ENCODE measurements at regions of chr5 and their contacts with region 1.

Region 1: DNA sequence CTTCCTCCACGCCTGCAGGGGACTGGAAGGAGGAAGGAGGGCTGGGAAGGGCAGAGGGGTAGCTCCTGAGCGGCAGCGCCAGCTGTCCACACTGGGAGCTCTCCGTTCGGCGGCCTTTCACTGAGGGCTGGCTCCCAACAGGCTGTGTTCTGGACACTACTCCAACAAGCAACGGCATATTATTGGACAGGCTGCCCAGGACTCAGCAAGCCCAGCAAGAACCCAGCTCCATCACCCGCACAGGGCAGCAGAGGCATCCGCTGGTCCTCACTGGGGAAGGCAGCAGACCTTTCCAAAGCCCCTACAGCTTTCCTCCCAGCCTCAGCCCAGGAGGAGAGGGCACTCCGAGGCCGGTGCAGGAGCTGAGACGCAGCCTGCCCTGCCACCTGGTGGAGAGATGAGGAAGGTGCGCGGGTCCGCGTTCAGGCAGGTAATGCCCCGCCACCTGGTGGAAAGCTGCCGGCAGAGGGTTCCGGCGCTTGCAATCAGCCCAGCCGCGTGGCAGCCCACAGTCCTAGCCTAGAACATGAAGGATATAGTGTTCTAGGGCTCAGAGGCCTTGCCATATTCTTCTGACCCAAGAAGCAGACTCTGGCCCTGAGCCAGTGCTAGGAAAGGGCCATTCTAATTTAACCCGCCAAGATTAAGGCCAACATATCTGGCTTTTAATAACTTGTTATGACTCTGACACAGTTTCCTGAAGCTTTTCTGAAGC is 74.4 kb downstream of the NRG2 start:
- DNase-seq: peak; percentile 72
- ATAC-seq: peak; percentile 99
- H3K4me3 ChIP-seq: no peak overlapping the region
- H3K27ac ChIP-seq: no peak overlapping the region
- H3K4me1 ChIP-seq: peaks cover 2 to 7% of the 10 kb centered on the region in 2 experiments; a peak in 2 of 4 replicates
- H3K27me3 ChIP-seq: no peaks in the 10 kb centered on the region
- CTCF ChIP-seq: peak; percentile 100
- POLR2A ChIP-seq: no peak
- RAD21 ChIP-seq: peak; percentile 100

Region 2: GRCh38 chr5:139787568-139788293 is 181.0 kb before region 1 on chr5:
- CTCF ChIA-PET with region 1: interaction called, 181 read pairs
- POLR2A ChIA-PET with region 1: interaction called, 10 read pairs
- RAD21 ChIA-PET with region 1: interaction called, 16 to 21 read pairs
- intact Hi-C with region 1: loop called (anchors 1 kb)
- DNase-seq: peak; percentile 54
- ATAC-seq: peak; percentile 90
- H3K4me3 ChIP-seq: peak overlapping the region; percentile 58 to 63
- H3K27ac ChIP-seq: peak overlapping the region; percentile 47; the same call in 1 of the 2 replicates
- H3K4me1 ChIP-seq: peaks cover 3 to 10% of the 10 kb centered on the region in 2 experiments; a peak in 2 of 4 replicates
- H3K27me3 ChIP-seq: no peaks in the 10 kb centered on the region
- CTCF ChIP-seq: peak; percentile 86 to 99 (median 95)
- POLR2A ChIP-seq: no peak
- RAD21 ChIP-seq: peak; percentile 99

Region 3: DNA sequence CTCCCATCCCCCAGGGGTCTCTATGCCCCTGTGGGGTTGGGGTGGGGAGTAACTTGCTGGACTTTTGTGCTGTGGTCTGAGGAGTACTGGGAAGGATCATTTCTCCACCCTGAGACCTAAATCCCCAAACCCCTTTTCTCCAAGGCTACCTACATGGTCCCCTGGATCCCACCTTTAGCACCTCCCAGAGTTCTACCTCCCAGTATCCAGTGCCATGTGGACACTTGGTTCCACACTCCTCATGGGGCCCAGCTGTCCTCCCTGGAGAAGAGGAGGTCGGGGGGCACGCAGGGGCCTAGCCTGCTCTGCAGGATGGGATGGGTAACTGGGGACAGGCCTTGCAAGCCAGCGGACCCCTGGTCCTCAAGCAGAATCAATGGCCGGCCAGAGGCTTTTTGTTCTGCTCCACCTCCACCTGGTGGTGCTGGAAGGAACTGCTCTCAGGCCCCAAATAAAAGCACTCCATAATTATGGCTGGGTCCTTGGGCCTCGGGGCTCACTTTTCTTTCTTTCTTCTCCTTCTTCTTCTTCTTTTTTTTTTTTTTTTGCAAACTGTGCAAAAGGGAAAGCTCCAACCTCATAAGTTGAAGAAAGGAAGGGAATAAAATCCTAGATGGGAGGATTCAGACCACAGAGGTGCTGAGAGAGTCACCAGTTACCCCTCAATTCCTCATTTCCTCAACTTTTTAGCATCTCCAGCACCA is 104.7 kb before region 1 on chr5:
- CTCF ChIA-PET with region 1: interaction called, 6 read pairs
- POLR2A ChIA-PET with region 1: no interaction called
- RAD21 ChIA-PET with region 1: no interaction called
- intact Hi-C with region 1: loop called (anchors 5 kb)
- DNase-seq: no peak
- ATAC-seq: peak; percentile 88
- H3K4me3 ChIP-seq: no peak overlapping the region
- H3K27ac ChIP-seq: no peak overlapping the region
- H3K4me1 ChIP-seq: no peaks in the 10 kb centered on the region; a peak in 1 of 4 replicates
- H3K27me3 ChIP-seq: no peaks in the 10 kb centered on the region
- CTCF ChIP-seq: peak; percentile 85 to 90 (median 88)
- POLR2A ChIP-seq: no peak
- RAD21 ChIP-seq: peak; percentile 85

Region 4: DNA sequence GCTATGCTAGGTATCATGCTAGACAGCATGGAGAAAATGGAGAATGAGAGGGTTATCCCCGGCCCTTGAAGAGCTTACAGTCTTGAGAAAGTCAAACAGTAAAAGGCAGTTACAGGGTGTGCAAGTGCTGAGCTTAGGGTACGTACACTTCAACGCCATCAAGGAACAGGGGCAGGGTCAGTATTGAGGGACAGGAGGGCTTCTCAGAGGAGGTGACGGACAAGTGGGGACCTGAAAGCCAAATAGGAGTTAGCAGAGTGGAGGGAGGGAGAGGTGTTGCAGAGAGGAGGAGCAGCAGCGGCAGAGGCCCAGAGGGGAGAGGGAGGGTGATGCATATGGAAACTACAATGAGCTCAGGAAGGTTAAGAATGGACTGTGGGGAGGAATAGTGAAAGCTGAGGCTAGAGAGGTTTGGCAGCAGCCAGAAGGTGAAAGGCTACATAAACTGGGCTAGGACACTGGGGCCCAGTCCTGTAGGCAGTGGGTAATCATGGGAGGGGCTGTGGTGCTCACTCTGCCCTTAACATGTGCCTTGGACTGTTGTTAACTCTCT is 13.6 kb before region 1 on chr5:
- CTCF ChIA-PET with region 1: interaction called, 24 read pairs
- POLR2A ChIA-PET with region 1: no interaction called
- RAD21 ChIA-PET with region 1: no interaction called
- intact Hi-C with region 1: no loop called
- DNase-seq: no peak
- ATAC-seq: peak; percentile 34
- H3K4me3 ChIP-seq: no peak overlapping the region
- H3K27ac ChIP-seq: no peak overlapping the region
- H3K4me1 ChIP-seq: peaks cover 5 to 13% of the 10 kb centered on the region in 2 experiments; a peak in 3 of 4 replicates
- H3K27me3 ChIP-seq: no peaks in the 10 kb centered on the region; the same call in 1 of the 2 replicates
- CTCF ChIP-seq: no peak
- POLR2A ChIP-seq: no peak
- RAD21 ChIP-seq: no peak

Region 5: GRCh38 chr5:140042643-140043500 is 74.2 kb after region 1 on chr5 and contains the start of gene NRG2:
- CTCF ChIA-PET with region 1: interaction called, 12 read pairs
- POLR2A ChIA-PET with region 1: no interaction called
- RAD21 ChIA-PET with region 1: interaction called in 1 of 2 experiments, 7 read pairs
- intact Hi-C with region 1: no loop called
- DNase-seq: peak; percentile 24
- ATAC-seq: peak; percentile 89
- H3K4me3 ChIP-seq: peak within 1 kb of the TSS; percentile 48 to 60
- H3K27ac ChIP-seq: peak within 1 kb of the TSS; percentile 28; the same call in 1 of the 2 replicates
- H3K4me1 ChIP-seq: peaks cover 3 to 27% of the 10 kb centered on the region in 2 experiments; a peak in 3 of 4 replicates
- H3K27me3 ChIP-seq: no peaks in the 10 kb centered on the region
- CTCF ChIP-seq: peak; percentile 44 to 53 (median 45); a peak in 4 of 6 replicates
- POLR2A ChIP-seq: no peak
- RAD21 ChIP-seq: no peak
- total RNA-seq, gene NRG2: 0.91 TPM

Region 6: DNA sequence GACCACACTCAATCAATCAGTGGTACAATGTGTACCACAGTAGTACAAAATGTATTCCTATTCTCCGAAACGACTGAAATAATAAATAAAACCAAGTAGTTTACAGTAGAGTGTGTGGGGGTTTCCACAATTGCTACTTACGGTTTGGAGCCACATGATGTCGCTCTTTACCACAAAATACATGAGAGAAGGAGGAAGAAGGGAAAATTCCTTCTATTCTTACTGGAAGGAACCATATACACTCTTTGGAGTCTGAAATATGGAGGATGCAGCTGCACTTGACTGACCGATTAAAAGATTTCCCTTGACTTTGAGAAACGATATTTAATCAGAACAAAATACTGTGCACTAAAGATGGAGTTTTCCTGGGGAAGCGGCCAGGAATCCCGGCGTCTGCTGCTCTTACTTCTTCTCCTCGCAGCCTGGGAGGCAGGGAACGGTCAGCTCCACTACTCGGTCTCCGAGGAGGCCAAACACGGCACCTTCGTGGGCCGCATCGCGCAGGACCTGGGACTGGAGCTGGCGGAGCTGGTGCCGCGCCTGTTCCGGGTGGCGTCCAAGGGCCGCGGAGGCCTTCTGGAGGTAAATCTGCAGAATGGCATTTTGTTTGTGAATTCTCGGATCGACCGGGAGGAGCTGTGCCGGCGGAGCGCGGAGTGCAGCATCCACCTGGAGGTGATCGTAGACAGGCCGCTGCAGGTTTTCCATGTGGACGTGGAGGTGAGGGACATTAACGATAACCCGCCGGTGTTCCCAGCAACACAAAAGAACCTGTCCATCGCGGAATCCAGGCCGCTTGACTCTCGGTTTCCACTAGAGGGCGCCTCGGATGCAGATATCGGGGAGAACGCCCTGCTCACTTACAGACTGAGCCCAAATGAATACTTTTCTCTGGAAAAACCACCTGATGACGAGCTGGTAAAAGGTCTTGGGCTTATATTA is 838.4 kb after region 1 on chr5 and contains the start of gene PCDHA4:
- CTCF ChIA-PET with region 1: no interaction called
- POLR2A ChIA-PET with region 1: no interaction called
- RAD21 ChIA-PET with region 1: no interaction called
- intact Hi-C with region 1: no loop called
- DNase-seq: no peak
- ATAC-seq: peak; percentile 65
- H3K4me3 ChIP-seq: no peak within 1 kb of the TSS
- H3K27ac ChIP-seq: no peak within 1 kb of the TSS
- H3K4me1 ChIP-seq: no peaks in the 10 kb centered on the region
- H3K27me3 ChIP-seq: no peaks in the 10 kb centered on the region
- CTCF ChIP-seq: peak; percentile 6 to 60 (median 57); a peak in 4 of 6 replicates
- POLR2A ChIP-seq: no peak
- RAD21 ChIP-seq: peak; percentile 36; the same call in 1 of the 2 replicates
- total RNA-seq, gene PCDHA4: not detected